Activated naive CD4-positive, alpha-beta T cell treated with anti-CD3 and anti-CD28 coated beads, Interleukin-2, amount 10 ng/mL, durations not matched to agents 7 days and 5 days (primary cell): ENCODE measurements at regions of chr19 and their contacts with region 1.

Region 1: GRCh38 chr19:45798995-45799517 is 6.4 kb upstream of the DMWD start:
- DNase-seq: peak; percentile 72
- H3K4me3 Mint-ChIP-seq: no peak overlapping the region
- H3K27ac Mint-ChIP-seq: peak overlapping the region; percentile 28
- H3K4me1 Mint-ChIP-seq: peaks cover 6% of the 10 kb centered on the region
- H3K27me3 Mint-ChIP-seq: peaks cover 97% of the 10 kb centered on the region

Region 2: DNA sequence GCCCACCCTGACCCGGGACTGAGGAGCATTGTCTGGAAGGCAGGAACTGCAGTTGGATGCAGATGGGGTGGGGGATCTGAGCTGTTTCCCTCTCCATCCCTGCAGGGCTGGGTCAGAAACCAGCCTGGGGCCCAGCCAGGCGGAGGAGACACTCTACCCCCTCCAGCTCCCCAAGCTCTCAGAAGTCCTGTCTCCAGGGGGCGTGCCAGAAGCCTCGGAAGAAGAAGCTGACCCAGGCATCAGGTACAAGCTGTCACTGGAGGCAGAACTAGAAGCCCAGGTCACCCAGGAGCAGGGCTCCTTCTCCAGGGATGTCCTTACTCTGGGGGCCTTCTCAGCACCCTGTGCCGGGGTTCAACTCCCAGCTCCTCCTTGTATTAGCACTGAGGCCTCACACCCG is 45.5 kb before region 1 on chr19:
- CTCF ChIA-PET with region 1: no interaction called
- DNase-seq: no peak
- H3K4me3 Mint-ChIP-seq: no peak overlapping the region
- H3K27ac Mint-ChIP-seq: no peak overlapping the region
- H3K4me1 Mint-ChIP-seq: no peaks in the 10 kb centered on the region
- H3K27me3 Mint-ChIP-seq: peaks cover 21% of the 10 kb centered on the region

Region 3: GRCh38 chr19:45770192-45771101 is 28.6 kb before region 1 on chr19:
- CTCF ChIA-PET with region 1: interaction called, 92 read pairs
- DNase-seq: peak; percentile 92
- H3K4me3 Mint-ChIP-seq: peak overlapping the region; percentile 83
- H3K27ac Mint-ChIP-seq: peak overlapping the region; percentile 89
- H3K4me1 Mint-ChIP-seq: peaks cover 23% of the 10 kb centered on the region
- H3K27me3 Mint-ChIP-seq: peaks cover 81% of the 10 kb centered on the region

Region 4: DNA sequence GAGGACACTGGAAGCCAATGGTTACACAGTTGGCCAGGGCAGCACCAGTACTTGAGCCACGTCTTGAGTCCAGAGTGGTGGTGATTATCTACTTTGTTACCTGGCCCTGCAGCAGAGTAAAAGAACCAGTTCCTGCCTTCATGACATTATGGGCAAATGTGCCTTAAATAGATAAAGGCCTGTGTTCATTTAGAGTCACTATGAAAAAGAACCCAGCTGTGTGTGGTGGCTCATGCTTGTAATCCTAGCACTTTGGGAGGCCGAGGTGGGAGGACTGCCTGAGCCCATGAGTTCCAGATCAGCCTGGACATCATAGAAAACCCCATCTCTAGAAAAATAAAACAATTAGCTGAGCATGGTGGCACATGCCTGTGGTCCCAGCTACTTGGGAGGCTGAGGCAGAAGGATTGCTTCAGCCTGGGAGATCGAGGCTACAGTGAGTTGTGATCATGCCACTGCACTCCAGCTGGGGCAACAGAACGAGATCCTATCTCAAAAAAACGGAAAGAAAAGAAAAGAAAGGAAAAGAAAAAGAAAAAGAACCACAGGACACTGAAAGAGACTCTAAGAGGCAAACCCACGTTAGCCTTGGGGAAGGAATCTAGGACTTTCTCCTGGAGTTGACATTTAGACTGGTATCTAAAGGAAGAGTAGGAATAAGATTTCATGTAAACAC is 90.3 kb after region 1 on chr19:
- CTCF ChIA-PET with region 1: no interaction called
- DNase-seq: no peak
- H3K4me3 Mint-ChIP-seq: no peak overlapping the region
- H3K27ac Mint-ChIP-seq: no peak overlapping the region
- H3K4me1 Mint-ChIP-seq: peaks cover 21% of the 10 kb centered on the region
- H3K27me3 Mint-ChIP-seq: no peaks in the 10 kb centered on the region